Activated naive CD4-positive, alpha-beta T cell treated with anti-CD3 and anti-CD28 coated beads, Interleukin-2, amount 10 ng/mL, durations not matched to agents 7 days and 5 days (primary cell): ENCODE measurements at regions of chr12 and their contacts with region 1.

Region 1: DNA sequence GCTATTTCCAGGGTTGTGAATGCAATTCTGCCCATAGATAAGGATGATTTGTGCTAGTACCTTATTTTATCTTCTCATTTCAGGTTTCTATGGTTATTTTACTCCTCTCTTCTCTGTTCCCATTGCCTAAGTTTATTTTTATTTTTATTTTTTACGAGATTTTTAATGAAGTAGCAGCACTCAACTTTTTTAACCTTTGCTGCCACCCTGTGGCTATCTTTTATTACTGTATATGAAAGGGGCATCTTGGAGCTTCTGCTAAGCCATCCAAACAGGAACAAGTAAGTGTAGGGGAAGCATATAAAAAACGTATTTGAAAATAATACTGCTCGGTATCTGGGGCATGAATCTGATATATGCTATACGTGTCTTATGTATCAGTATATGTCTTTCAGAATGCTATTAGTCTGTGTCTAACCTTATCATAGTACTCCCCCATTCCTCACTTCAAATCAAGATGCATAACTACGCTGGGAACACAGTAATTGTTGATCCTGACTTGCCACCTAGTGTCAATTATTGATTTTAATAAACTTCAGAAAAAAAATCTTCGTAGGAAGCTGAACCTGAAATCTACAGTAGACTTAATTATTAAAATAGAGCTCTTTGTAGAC is 60.3 kb downstream of the KLRG1 start:
- DNase-seq: peak; percentile 40
- H3K4me3 Mint-ChIP-seq: no peak overlapping the region
- H3K27ac Mint-ChIP-seq: no peak overlapping the region
- H3K4me1 Mint-ChIP-seq: peaks cover 23% of the 10 kb centered on the region
- H3K27me3 Mint-ChIP-seq: no peaks in the 10 kb centered on the region

Region 2: GRCh38 chr12:8658346-8658745 is 391.3 kb before region 1 on chr12:
- CTCF ChIA-PET with region 1: interaction called, 14 read pairs
- DNase-seq: no peak
- H3K4me3 Mint-ChIP-seq: no peak overlapping the region
- H3K27ac Mint-ChIP-seq: no peak overlapping the region
- H3K4me1 Mint-ChIP-seq: no peaks in the 10 kb centered on the region
- H3K27me3 Mint-ChIP-seq: peaks cover 29% of the 10 kb centered on the region

Region 3: DNA sequence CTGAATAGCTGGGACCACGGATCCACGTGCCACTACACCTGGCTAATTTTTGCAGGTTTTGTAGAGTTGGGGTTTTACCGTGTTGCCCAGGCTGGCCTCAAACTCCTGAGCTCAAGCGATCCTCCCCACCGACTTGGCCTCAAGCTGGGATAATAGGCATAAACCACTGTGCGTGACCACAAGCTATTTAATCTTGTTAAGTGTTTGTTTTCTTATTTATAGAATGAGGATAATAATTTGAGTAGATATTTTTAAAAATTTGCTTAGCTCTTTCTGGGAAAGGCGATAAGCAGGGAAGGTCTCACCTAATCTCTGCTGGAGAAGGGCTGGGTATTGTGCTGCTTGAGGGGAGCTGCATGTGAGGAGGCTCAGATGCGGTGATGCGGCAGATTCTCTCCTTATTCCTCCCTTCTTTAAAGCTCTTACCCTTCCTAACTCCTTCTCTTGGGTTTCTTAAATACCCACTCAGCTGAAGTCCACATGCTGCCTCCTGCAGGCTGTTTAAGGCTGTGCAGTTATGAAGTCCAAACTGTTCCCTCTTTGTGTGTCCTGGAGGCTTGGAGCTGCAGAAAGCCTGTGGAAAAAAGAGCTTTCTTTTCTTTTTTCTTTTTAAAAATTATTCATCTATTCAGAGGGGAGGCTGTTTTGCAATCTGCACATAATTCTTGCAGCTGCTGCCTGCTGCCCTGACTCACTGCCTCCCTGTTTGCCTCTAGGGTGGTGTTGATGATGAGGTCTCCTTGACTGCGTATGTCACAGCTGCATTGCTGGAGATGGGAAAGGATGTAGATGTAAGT is 189.3 kb before region 1 on chr12:
- CTCF ChIA-PET with region 1: interaction called, 11 read pairs
- DNase-seq: peak; percentile 51
- H3K4me3 Mint-ChIP-seq: no peak overlapping the region
- H3K27ac Mint-ChIP-seq: no peak overlapping the region
- H3K4me1 Mint-ChIP-seq: no peaks in the 10 kb centered on the region
- H3K27me3 Mint-ChIP-seq: peaks cover 4% of the 10 kb centered on the region

Region 4: GRCh38 chr12:8914716-8915526 is 134.7 kb before region 1 on chr12:
- CTCF ChIA-PET with region 1: interaction called, 10 read pairs
- DNase-seq: peak; percentile 77
- H3K4me3 Mint-ChIP-seq: no peak overlapping the region
- H3K27ac Mint-ChIP-seq: no peak overlapping the region
- H3K4me1 Mint-ChIP-seq: peaks cover 13% of the 10 kb centered on the region
- H3K27me3 Mint-ChIP-seq: peaks cover 5% of the 10 kb centered on the region

Region 5: DNA sequence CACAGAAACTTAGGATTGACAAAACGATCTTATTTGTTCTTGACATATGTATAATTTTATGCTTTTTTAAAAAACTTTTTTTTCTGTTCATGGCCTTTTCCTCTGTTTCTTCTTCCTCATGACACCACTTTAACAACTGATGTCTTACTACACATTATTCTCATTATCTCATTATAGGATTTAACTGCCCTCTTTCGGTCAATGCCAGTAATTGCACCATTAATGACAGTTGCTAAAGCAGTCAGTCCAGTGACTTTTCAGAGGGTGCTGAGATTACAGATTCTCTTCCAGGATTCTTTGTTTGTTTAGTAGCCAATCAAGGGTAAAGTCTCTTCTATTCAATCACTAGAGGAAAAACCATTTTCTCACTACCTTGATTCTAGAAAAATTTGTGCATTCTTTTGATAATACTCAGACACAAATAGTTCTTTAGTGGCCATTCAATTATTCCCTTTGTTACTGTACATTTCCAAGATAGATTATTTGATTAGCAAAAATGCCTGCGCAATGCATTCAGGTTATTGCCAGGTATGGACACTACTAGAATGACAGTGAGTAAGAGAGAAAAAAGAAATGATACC is 10.1 kb before region 1 on chr12:
- CTCF ChIA-PET with region 1: interaction called, 10 read pairs
- DNase-seq: peak; percentile 32
- H3K4me3 Mint-ChIP-seq: no peak overlapping the region
- H3K27ac Mint-ChIP-seq: no peak overlapping the region
- H3K4me1 Mint-ChIP-seq: peaks cover 39% of the 10 kb centered on the region
- H3K27me3 Mint-ChIP-seq: no peaks in the 10 kb centered on the region